PC-9 (cell line): ENCODE measurements at regions of chr3 and their contacts with region 1.

Region 1: DNA sequence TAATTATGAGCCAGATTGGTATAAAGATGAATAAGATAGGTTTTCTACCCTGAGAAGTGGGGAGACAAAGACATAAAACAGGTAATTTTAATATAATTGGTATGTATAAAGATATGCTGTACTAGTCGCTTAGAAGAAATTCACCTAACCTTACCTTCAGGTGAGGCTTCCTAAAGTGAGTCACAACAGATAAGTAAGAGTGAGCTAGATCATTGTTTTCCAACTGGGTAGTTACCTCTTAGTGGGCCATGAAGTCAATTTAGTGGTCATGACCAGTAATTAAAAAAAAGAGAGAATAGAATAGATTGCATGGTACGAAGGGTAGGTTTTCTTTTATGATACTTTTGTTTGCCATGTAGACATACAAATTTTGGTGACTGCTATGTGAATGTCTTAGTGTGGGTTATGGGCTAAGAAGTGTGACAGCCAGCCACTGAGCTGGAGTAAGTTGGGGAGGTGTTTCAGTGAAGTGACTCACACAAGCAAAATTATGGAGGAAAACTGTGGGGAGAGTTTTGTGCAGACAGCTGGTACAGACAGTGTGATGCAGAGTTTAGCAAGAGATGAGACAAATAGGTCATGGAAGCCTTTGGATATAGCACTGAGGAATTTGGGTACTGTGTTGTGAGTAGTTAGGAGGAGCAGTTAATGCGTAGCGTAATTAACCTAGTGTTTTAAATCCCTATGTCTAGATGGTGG is 8.2 kb downstream of the TRNT1 start:
- DNase-seq: no peak
- H3K4me3 ChIP-seq: no peak overlapping the region
- H3K27ac ChIP-seq: no peak overlapping the region
- H3K4me1 ChIP-seq: no peaks in the 10 kb centered on the region
- H3K27me3 ChIP-seq: no peaks in the 10 kb centered on the region
- CTCF ChIP-seq: no peak

Region 2: DNA sequence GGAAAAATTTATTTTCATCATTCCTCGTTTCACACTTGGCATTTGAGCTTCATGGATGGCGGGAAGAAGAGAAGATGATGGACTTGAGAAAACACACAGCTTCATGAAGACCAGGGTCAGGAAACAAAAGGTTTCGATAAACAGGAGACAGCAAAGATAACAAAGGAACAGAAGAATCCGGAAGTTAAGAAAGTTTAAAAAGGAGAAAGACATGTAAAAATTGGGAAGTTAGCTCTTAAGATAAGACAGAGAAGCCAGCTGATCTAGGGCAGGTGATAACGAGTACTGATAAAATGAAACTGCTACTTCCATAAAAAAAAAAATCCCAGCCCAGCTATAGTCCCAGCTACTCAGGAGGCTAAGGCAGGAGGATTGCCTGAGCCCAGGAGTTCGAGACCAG is 48.7 kb before region 1 on chr3:
- CTCF ChIA-PET with region 1: no interaction called
- POLR2A ChIA-PET with region 1: interaction called, 11 read pairs
- intact Hi-C with region 1: no loop called
- DNase-seq: no peak
- H3K4me3 ChIP-seq: no peak overlapping the region
- H3K27ac ChIP-seq: no peak overlapping the region
- H3K4me1 ChIP-seq: no peaks in the 10 kb centered on the region
- H3K27me3 ChIP-seq: no peaks in the 10 kb centered on the region; the same call in 1 of the 2 replicates
- CTCF ChIP-seq: no peak

Region 3: DNA sequence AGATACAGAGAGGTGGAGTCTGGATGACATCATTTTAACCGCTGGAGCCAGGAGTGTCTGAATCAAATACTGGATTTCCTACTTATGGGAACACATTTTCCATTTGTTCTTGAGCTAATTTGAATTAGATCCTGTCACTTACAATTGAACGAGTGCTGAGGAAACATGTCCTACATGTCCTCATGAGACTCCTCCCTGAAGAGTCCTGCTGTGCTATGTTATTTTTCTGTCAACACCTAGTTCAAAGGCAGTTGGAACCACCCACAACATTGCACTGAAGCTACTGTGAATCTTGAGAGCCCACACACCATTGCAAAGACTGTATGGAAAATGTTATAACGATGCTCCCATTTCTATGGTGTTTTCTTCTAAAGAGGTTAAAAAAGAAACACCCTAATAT is 168.1 kb after region 1 on chr3:
- CTCF ChIA-PET with region 1: no interaction called
- POLR2A ChIA-PET with region 1: no interaction called
- intact Hi-C with region 1: no loop called
- DNase-seq: no peak
- H3K4me3 ChIP-seq: no peak overlapping the region
- H3K27ac ChIP-seq: no peak overlapping the region
- H3K4me1 ChIP-seq: no peaks in the 10 kb centered on the region
- H3K27me3 ChIP-seq: no peaks in the 10 kb centered on the region
- CTCF ChIP-seq: no peak